CD4-positive, alpha-beta memory T cell (primary cell): ENCODE measurements at regions of chr15 and their contacts with region 1.

Region 1: GRCh38 chr15:73972984-73973682 is 19.0 kb downstream of the STOML1 start:
- DNase-seq: peak; percentile 73 to 76 (median 76)
- H3K4me3 ChIP-seq: no peak overlapping the region
- H3K4me3 Mint-ChIP-seq: peak overlapping the region in 3 of 8 donors; percentile 29 to 43 (median 39)
- H3K27ac ChIP-seq: no peak overlapping the region
- H3K27ac Mint-ChIP-seq: no peak overlapping the region
- H3K4me1 ChIP-seq: peaks cover 22% of the 10 kb centered on the region
- H3K4me1 Mint-ChIP-seq: peaks cover 11 to 36% (median 23%) of the 10 kb centered on the region in 4 donors
- H3K27me3 ChIP-seq: no peaks in the 10 kb centered on the region
- H3K27me3 Mint-ChIP-seq: peaks cover 16 to 20% of the 10 kb centered on the region in 2 donors

Region 2: DNA sequence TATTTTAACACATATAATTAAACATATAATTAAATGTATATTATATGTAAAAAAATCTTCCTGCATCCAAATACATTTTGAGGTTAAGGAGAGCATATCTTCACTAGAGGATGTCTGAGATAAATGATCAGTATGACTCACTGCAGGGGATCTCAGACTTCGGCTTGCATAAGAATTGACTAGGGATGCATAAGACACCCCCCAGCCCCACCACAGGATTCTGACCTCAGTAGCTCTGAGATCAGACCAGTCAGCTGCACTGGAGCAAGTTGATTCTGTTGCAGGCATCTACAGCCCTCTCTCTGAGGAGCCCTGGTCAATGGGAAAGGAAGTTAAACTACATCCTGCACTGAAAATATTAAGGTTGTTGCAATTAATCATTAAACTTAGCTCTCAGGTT is 128.8 kb before region 1 on chr15:
- CTCF ChIA-PET with region 1: no interaction called
- POLR2A ChIA-PET with region 1: no interaction called
- intact Hi-C with region 1: no loop called
- DNase-seq: no peak
- H3K4me3 ChIP-seq: no peak overlapping the region
- H3K4me3 Mint-ChIP-seq: no peak overlapping the region
- H3K27ac ChIP-seq: no peak overlapping the region
- H3K27ac Mint-ChIP-seq: no peak overlapping the region
- H3K4me1 ChIP-seq: no peaks in the 10 kb centered on the region
- H3K4me1 Mint-ChIP-seq: no peaks in the 10 kb centered on the region
- H3K27me3 ChIP-seq: no peaks in the 10 kb centered on the region
- H3K27me3 Mint-ChIP-seq: peaks cover 8 to 25% of the 10 kb centered on the region in 2 donors

Region 3: GRCh38 chr15:73897441-73898261 is 75.5 kb before region 1 on chr15:
- CTCF ChIA-PET with region 1: no interaction called
- POLR2A ChIA-PET with region 1: no interaction called
- intact Hi-C with region 1: no loop called
- DNase-seq: peak; percentile 51 to 60 (median 57)
- H3K4me3 ChIP-seq: no peak overlapping the region
- H3K4me3 Mint-ChIP-seq: no peak overlapping the region
- H3K27ac ChIP-seq: no peak overlapping the region
- H3K27ac Mint-ChIP-seq: no peak overlapping the region
- H3K4me1 ChIP-seq: no peaks in the 10 kb centered on the region
- H3K4me1 Mint-ChIP-seq: peaks cover 0 to 9% (median under 1%) of the 10 kb centered on the region in 4 donors
- H3K27me3 ChIP-seq: no peaks in the 10 kb centered on the region
- H3K27me3 Mint-ChIP-seq: peaks cover 0 to 2% of the 10 kb centered on the region in 2 donors

Region 4: GRCh38 chr15:73950831-73951561 is 22.1 kb before region 1 on chr15:
- CTCF ChIA-PET with region 1: interaction called, 168 read pairs
- POLR2A ChIA-PET with region 1: interaction called, 7 read pairs
- intact Hi-C with region 1: no loop called
- DNase-seq: peak; percentile 63 to 66 (median 64)
- H3K4me3 ChIP-seq: no peak overlapping the region
- H3K4me3 Mint-ChIP-seq: peak overlapping the region in 2 of 8 donors; percentile 39 to 59
- H3K27ac ChIP-seq: peak overlapping the region; percentile 5
- H3K27ac Mint-ChIP-seq: peak overlapping the region; percentile 19 to 97 (median 94)
- H3K4me1 ChIP-seq: peaks cover 5% of the 10 kb centered on the region
- H3K4me1 Mint-ChIP-seq: peaks cover 3 to 22% (median 6%) of the 10 kb centered on the region in 4 donors
- H3K27me3 ChIP-seq: no peaks in the 10 kb centered on the region
- H3K27me3 Mint-ChIP-seq: no peaks in the 10 kb centered on the region

Region 5: GRCh38 chr15:73991726-73992593 is 18.8 kb after region 1 on chr15 and contains the start of gene STOML1:
- CTCF ChIA-PET with region 1: interaction called, 46 read pairs
- POLR2A ChIA-PET with region 1: interaction called, 3 read pairs
- intact Hi-C with region 1: loop called (anchors 2 kb)
- DNase-seq: peak; percentile 91 to 94 (median 91)
- H3K4me3 ChIP-seq: peak within 1 kb of the TSS; percentile 66 to 72
- H3K4me3 Mint-ChIP-seq: peak within 1 kb of the TSS; percentile 80 to 99 (median 84)
- H3K27ac ChIP-seq: peak within 1 kb of the TSS; percentile 67
- H3K27ac Mint-ChIP-seq: peak within 1 kb of the TSS; percentile 75 to 90 (median 86)
- H3K4me1 ChIP-seq: peaks cover 42% of the 10 kb centered on the region
- H3K4me1 Mint-ChIP-seq: peaks cover 26 to 59% (median 39%) of the 10 kb centered on the region in 4 donors
- H3K27me3 ChIP-seq: no peaks in the 10 kb centered on the region
- H3K27me3 Mint-ChIP-seq: no peaks in the 10 kb centered on the region
- total RNA-seq, gene STOML1: 10.8 to 11.1 TPM

Region 6: DNA sequence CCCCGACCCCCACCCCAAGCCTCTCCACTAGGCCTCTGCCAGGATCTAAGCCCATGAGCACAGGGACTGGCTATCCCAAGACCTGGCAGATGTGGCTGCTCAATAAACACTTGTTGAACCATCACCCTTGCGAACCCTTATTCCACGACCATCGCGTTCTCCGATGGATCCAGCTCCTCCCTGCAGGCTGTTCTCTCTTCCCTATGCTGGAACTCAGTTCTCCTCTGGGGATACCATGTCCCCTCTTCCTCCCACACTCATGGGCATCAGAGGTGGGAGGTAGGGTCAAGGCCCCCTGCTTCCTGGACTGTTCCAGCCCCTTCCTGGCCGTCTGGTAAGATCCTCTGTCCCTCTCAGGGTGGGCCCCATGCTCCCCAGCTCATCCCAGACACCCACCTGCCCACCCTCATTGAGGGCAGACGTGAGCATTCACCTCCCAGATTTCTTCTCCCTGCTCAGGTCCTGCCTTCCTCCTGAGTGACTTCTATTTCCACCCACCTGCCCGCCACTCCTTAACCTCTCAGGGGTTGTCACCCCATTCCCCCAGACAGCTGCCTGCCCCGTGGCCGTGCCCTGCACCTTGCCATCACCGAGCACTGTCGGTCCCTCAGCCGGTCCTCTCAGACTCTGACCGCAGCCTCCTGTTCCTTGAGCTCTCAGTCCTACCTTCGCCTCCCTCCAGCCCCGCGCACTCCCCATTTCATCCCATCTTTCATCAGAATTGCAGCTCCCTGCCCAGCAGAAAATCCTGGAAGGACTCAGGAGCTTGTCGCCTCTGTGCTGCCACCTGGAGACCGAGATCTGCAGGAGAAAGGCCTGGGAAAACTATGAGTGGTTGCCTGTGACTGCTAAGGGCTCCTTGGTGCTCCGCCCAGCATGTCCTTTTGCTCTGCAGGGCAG is 63.4 kb after region 1 on chr15:
- CTCF ChIA-PET with region 1: interaction called, 14 read pairs
- POLR2A ChIA-PET with region 1: interaction called, 3 read pairs
- intact Hi-C with region 1: no loop called
- DNase-seq: no peak
- H3K4me3 ChIP-seq: no peak overlapping the region
- H3K4me3 Mint-ChIP-seq: no peak overlapping the region
- H3K27ac ChIP-seq: no peak overlapping the region
- H3K27ac Mint-ChIP-seq: peak overlapping the region in 2 of 7 donors; percentile 38 to 64
- H3K4me1 ChIP-seq: no peaks in the 10 kb centered on the region
- H3K4me1 Mint-ChIP-seq: no peaks in the 10 kb centered on the region
- H3K27me3 ChIP-seq: no peaks in the 10 kb centered on the region
- H3K27me3 Mint-ChIP-seq: no peaks in the 10 kb centered on the region

Region 7: DNA sequence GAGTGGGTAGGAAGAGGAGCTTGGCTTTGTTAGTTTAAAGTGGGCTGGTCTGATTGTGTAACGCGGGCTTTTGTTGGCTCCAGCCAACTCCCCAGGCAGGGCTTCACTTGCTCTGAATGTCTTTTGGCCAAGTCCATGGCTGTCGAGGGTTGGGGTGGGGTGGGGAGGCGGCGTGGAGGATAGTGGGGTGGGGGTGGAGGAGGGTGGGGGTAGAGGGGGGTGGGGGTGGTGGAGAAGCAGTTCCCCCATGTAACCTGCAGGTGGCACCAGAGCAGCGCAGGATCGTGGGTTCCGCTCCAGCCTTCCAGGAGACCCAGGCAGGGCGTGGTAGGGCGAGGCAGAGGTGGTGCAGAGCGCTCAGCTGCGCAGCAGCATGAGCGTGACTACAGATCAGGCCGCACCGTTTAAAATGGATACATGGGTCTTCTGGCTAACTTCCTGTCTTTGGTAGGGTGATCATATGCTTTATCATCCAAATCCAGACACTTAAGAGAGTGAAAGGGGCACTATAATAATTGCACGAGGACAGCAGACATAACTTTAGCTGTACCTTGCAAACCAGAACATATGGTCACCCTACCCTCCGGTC is 80.9 kb after region 1 on chr15:
- CTCF ChIA-PET with region 1: interaction called, 27 read pairs
- POLR2A ChIA-PET with region 1: no interaction called
- intact Hi-C with region 1: loop called (anchors 5 kb)
- DNase-seq: peak; percentile 57 to 68 (median 61)
- H3K4me3 ChIP-seq: no peak overlapping the region
- H3K4me3 Mint-ChIP-seq: peak overlapping the region in 4 of 8 donors; percentile 17 to 46 (median 32)
- H3K27ac ChIP-seq: no peak overlapping the region
- H3K27ac Mint-ChIP-seq: peak overlapping the region in 1 of 7 donors; percentile 72
- H3K4me1 ChIP-seq: peaks cover 7% of the 10 kb centered on the region
- H3K4me1 Mint-ChIP-seq: peaks cover 2 to 18% (median 7%) of the 10 kb centered on the region in 4 donors
- H3K27me3 ChIP-seq: no peaks in the 10 kb centered on the region
- H3K27me3 Mint-ChIP-seq: peaks cover 0 to 2% of the 10 kb centered on the region in 2 donors

Region 8: DNA sequence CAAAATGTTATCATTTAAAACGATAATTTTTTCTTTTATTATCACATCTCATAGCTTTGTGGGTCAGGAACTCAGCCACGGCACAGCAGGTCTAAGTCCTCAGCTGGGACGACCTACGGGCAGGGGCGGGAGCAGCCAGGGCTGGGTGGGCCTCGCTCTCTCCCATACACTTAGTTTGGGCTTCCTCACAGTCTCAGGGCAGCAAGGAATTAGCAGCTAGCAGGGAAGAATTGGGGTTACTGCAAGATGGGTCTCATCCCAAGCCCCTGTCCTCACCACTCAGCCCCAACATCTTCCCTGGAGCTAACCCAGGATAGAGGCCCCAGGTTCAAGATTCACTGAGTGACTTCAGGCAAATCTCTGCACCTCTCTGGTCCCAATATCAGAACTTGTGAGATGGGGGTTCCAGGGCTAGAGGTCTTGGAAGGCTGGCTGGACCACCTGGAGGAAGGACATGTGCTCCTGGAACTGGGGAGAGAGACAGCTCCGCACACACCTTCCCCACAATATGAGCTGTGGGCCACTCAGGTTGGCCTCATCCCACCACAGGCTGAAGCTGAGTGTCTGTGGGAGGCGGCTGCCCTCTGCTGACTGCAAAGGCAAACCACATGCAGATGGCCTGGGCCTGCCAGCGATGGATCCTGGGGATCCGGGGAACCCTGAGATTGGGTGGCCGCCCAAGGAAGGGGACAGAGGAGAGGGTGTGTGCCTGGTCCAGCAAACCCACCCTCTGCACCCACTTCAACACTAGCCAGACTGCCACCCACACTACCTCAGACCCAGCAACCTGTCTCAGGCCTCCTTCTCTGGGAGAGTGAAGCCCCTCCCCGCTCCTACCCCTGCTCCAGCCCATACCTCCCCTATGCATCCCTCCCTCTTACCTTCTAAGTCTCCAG is 349.3 kb after region 1 on chr15:
- CTCF ChIA-PET with region 1: interaction called, 13 read pairs
- POLR2A ChIA-PET with region 1: no interaction called
- intact Hi-C with region 1: loop called (anchors 1 kb)
- DNase-seq: peak; percentile 38 to 54 (median 45)
- H3K4me3 ChIP-seq: no peak overlapping the region
- H3K4me3 Mint-ChIP-seq: no peak overlapping the region
- H3K27ac ChIP-seq: no peak overlapping the region
- H3K27ac Mint-ChIP-seq: no peak overlapping the region
- H3K4me1 ChIP-seq: no peaks in the 10 kb centered on the region
- H3K4me1 Mint-ChIP-seq: no peaks in the 10 kb centered on the region
- H3K27me3 ChIP-seq: no peaks in the 10 kb centered on the region
- H3K27me3 Mint-ChIP-seq: peaks cover 2 to 6% of the 10 kb centered on the region in 2 donors